ENCODE measurements at regions of chr14 and their contacts with region 1.

Region 1: DNA sequence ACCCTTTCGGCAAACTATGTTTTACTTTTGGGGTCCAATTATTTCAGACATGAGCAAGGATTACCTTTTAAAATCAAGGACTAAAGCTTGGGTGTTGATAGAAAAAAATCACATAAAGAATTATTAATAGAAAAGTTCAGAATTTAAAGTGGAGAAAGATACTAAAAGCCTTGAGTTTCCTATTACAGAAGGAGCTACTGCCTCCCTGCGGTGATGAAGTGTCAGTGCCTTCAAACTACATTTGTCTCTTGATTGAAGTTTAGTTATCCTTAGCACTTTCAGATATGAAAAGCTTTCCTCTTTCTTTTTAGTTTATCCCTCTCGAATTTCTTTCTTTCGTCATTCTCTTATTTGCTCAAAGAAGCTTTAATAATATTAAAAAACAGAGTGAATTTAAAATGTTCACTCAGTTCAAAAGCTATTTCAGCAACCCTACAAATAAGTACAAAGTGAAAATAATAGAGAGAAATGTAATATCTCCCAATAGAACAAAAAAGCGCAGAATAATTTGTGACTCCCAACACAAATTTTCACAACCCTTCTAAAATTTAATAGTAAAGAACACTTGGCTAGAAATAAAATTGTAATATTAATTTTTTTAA is 87.6 kb downstream of the SEC23A start:
- DNase-seq: peak in 1 of 2 experiments; percentile 37
- H3K4me3 ChIP-seq: no peak overlapping the region
- H3K4me3 Mint-ChIP-seq: no peak overlapping the region
- H3K27ac Mint-ChIP-seq: no peak overlapping the region
- H3K4me1 ChIP-seq: peaks cover 4% of the 10 kb centered on the region; the same call in 1 of the 2 replicates
- H3K4me1 Mint-ChIP-seq: peaks cover 6% of the 10 kb centered on the region
- H3K27me3 ChIP-seq: no peaks in the 10 kb centered on the region
- H3K27me3 Mint-ChIP-seq: no peaks in the 10 kb centered on the region
- CTCF ChIP-seq: peak; percentile 67 to 81

Region 2: DNA sequence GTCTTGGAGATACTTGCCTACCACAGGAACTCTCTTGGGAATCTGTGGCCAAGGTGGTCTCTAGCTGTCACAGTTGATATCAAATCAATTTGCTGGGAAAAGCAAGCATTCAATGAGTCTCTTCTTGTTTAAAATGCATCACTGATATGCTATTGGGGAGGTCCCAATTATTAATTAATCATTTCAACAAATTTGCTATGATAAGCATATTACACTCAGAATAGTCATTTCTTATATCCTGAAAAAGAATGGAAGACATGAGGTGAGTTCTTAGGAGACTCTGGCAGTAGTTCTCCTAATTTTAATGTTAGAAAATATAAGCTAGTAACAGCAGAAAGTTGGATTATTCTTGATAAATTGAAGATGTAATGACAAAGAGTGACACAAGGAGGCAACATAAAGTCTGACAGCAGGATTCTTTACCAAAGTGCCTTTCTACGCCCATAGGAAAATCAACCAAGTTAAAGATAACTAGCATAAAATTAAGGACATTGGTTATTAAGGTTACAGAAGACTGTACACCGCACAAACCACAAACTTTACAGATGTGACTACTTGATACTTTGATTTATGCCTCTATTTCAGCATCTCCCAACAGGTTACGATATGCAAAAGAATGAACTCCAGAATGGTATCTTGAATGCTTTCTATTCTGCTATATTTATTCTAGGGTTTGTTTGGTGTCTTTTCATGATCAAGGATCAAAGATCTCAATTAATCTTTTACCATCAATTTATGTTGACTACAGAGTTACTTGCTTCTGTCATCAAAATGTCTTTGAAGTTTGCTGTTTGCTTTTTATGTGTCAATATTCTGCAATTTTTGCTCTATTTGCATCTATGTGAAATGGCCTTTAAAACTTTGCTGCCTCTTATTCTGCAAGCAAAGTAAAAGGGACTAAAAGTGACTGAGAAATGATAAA is 410.0 kb before region 1 on chr14:
- CTCF ChIA-PET with region 1: no interaction called
- POLR2A ChIA-PET with region 1: no interaction called
- intact Hi-C with region 1: loop called (anchors 1 kb)
- DNase-seq: no peak
- H3K4me3 ChIP-seq: no peak overlapping the region
- H3K4me3 Mint-ChIP-seq: no peak overlapping the region
- H3K27ac Mint-ChIP-seq: no peak overlapping the region
- H3K4me1 ChIP-seq: no peaks in the 10 kb centered on the region
- H3K4me1 Mint-ChIP-seq: no peaks in the 10 kb centered on the region
- H3K27me3 ChIP-seq: no peaks in the 10 kb centered on the region
- H3K27me3 Mint-ChIP-seq: peaks cover under 1% of the 10 kb centered on the region
- CTCF ChIP-seq: peak; percentile 10 to 29

Region 3: GRCh38 chr14:38721822-38722431 is 293.5 kb before region 1 on chr14:
- CTCF ChIA-PET with region 1: interaction called, 3 read pairs
- POLR2A ChIA-PET with region 1: no interaction called
- intact Hi-C with region 1: loop called (anchors 1 kb)
- DNase-seq: peak in 1 of 2 experiments; percentile 57
- H3K4me3 ChIP-seq: no peak overlapping the region
- H3K4me3 Mint-ChIP-seq: no peak overlapping the region
- H3K27ac Mint-ChIP-seq: no peak overlapping the region
- H3K4me1 ChIP-seq: no peaks in the 10 kb centered on the region
- H3K4me1 Mint-ChIP-seq: no peaks in the 10 kb centered on the region
- H3K27me3 ChIP-seq: no peaks in the 10 kb centered on the region
- H3K27me3 Mint-ChIP-seq: peaks cover 9% of the 10 kb centered on the region
- CTCF ChIP-seq: peak; percentile 51 to 75

Region 4: DNA sequence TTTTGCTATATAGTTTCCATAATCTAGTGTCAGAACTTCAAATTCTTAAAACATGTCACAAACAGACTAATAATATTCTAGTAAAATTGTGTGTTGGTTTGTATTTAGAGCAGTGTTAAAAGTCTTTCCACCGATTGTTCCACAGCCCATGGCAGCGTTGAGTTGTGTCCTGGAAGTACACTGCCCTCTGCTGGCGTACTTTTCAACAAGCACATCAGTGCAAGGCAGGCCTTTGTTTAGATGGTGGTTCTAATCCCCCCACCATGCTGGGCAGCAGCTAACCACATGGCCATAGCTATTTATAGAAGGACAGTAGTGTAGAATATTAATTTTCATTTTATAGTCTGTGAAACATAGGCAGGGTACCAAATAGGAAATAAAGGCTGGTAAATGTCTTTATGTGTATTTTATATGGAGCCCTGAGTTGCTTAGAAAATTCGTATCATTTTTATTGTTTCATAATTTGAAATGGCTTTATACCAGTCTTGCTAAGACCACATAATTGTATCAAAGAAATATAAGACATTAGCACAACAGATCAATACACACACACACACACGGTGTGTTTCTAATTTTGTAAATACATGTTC is 147.8 kb before region 1 on chr14:
- CTCF ChIA-PET with region 1: interaction called, 3 read pairs
- POLR2A ChIA-PET with region 1: no interaction called
- intact Hi-C with region 1: loop called (anchors 1 kb)
- DNase-seq: peak; percentile 73 to 74
- H3K4me3 ChIP-seq: no peak overlapping the region
- H3K4me3 Mint-ChIP-seq: no peak overlapping the region
- H3K27ac Mint-ChIP-seq: no peak overlapping the region
- H3K4me1 ChIP-seq: peaks cover 3% of the 10 kb centered on the region; the same call in 1 of the 2 replicates
- H3K4me1 Mint-ChIP-seq: peaks cover 9% of the 10 kb centered on the region
- H3K27me3 ChIP-seq: no peaks in the 10 kb centered on the region; the same call in 1 of the 2 replicates
- H3K27me3 Mint-ChIP-seq: no peaks in the 10 kb centered on the region
- CTCF ChIP-seq: peak; percentile 73 to 80

Region 5: GRCh38 chr14:38941485-38941884 is 74.0 kb before region 1 on chr14:
- CTCF ChIA-PET with region 1: interaction called, 3 read pairs
- POLR2A ChIA-PET with region 1: interaction called, 3 read pairs
- intact Hi-C with region 1: loop called (anchors 1 kb)
- DNase-seq: peak in 1 of 2 experiments; percentile 13
- H3K4me3 ChIP-seq: no peak overlapping the region
- H3K4me3 Mint-ChIP-seq: no peak overlapping the region
- H3K27ac Mint-ChIP-seq: no peak overlapping the region
- H3K4me1 ChIP-seq: no peaks in the 10 kb centered on the region
- H3K4me1 Mint-ChIP-seq: no peaks in the 10 kb centered on the region
- H3K27me3 ChIP-seq: no peaks in the 10 kb centered on the region
- H3K27me3 Mint-ChIP-seq: peaks cover 4% of the 10 kb centered on the region
- CTCF ChIP-seq: peak in 1 of 2 experiments; percentile 22